Cardiac septum (tissue), 1 donor: ENCODE measurements at regions of chr5 and their contacts with region 1.

Region 1: DNA sequence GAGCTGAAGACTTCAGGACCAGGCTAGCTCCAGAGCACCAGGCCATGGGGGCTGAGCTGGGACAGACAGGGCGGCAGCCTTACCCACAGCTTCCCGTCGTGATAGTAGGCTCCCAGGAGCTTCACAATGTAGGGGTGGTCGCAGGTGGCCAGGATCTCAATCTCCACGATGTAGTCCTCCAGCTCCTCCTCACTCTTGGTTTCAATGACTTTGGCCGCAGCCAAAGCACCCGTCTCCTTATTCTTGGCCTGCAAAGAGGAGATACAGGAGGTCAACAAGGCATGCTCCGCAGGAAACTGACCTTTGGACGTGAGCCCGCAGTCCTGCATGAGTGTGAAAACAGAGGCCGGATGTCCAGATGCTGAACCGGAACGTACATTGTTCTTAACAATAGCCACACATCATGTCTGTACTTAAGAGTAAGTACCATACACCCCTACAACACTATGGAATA is 31.5 kb downstream of the STK10 start:
- DNase-seq: no peak

Region 2: DNA sequence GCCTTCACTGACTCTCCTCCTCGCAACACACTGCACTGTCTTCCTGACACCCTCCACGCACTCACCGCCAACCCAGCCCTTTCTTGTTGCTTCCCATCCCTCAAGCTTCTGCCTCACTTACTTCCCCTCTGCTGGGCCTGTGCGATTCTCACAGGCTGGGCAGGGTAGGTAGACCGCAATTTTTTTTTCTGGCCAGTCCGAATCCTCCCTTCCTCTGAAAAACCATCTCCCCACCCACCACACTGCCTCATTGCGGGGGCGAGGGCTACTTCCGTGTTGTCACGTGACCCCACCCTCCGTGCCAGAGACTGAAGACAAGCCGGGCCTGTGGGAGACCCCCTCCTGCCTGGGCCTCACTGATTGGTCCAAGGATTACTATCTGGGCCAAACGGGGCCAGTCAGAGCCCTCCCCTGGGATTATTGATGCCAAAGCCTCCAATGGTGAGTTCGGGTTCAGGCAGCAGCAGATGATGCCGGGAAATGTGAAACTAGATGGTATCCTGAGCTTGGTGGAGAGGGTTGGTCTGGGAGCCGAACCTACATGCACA is 41.6 kb before region 1 on chr5:
- intact Hi-C with region 1: loop called (anchors 5 kb)
- DNase-seq: peak; percentile 81

Region 3: DNA sequence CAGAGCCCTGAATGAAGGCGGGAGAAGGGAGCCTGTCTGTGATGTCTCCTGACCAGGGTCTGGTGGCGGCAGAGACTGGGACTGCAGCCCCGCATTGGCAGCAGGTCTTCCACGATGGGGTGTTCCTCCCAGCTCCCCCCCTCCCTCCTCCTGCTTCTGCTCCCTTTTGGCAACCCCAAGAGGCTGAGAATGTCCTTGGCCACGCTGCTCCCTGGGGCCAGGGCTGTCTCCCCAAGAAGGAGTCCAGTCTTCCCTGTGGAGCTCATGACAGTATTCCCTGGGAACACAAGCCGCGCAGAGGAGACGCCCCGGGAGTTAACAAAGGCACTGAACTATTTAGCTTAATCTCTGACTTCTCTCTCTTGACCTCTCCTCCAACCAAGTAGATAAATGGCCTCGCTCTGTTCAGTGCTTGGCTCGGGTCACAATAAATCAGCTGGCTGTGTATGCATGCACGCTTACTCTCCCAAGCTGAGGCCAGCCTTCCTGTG is 400.4 kb after region 1 on chr5:
- intact Hi-C with region 1: no loop called
- DNase-seq: no peak